ENCODE measurements at regions of chr11 and their contacts with region 1.

Region 1: DNA sequence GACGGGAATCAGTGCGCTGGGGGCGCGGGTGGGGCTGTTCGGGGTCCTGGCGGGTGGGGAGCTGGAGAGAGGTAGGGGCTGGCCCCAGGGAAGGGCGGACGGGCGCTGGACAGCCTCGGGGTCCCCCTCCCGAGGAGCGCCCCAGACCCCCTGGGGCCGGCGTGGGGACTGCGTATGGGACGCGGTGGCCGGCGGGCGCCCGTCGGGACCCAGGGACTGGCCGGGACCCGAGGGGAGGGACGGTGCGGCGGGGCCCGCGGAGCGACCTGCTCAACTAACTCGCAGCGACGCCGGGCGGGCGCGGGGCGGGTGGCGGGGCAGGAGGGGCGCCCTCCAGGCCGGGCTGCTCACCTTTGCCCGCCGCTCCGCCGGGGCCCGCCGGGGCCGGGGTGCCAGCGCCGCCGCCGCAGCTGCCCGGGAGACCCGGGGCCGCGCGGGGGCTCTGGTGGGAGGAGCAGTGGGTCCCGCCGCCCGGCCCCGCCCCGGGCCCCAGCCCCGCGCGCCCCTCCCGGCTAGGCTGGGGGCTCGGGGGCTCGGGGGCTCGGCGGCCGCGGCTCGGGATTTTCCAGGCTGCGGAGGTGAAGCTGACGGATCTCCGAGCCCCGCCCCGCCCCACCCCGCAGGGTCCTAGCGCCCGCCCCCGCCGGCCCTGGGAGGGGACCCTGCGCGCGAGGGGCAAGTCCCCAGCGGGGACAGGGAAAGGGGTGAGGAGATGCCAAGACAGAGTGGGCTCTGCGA is 12.4 kb downstream of the STARD10 start:
- DNase-seq: peak in 3 of 5 donors; percentile 70 to 86 (median 81)
- H3K4me3 ChIP-seq: peak overlapping the region in 2 of 3 donors; percentile 60 to 71
- H3K27ac ChIP-seq: peak overlapping the region; percentile 61 to 71
- H3K4me1 ChIP-seq: peaks cover 0 to 52% (median 19%) of the 10 kb centered on the region in 3 donors
- H3K27me3 ChIP-seq: no peaks in the 10 kb centered on the region
- CTCF ChIP-seq: no peak

Region 2: GRCh38 chr11:72736452-72737069 is 44.9 kb before region 1 on chr11:
- intact Hi-C with region 1: loop called (anchors 10 kb)
- DNase-seq: peak in 1 of 5 donors; percentile 84
- H3K4me3 ChIP-seq: no peak overlapping the region
- H3K27ac ChIP-seq: no peak overlapping the region
- H3K4me1 ChIP-seq: peaks cover 0 to 18% (median 3%) of the 10 kb centered on the region in 3 donors
- H3K27me3 ChIP-seq: no peaks in the 10 kb centered on the region
- CTCF ChIP-seq: no peak

Region 3: GRCh38 chr11:73288873-73289707 is 507.6 kb after region 1 on chr11:
- intact Hi-C with region 1: no loop called
- DNase-seq: peak; percentile 77 to 92 (median 83)
- H3K4me3 ChIP-seq: peak overlapping the region; percentile 41 to 50 (median 47)
- H3K27ac ChIP-seq: peak overlapping the region; percentile 38 to 75
- H3K4me1 ChIP-seq: peaks cover 4 to 16% (median 10%) of the 10 kb centered on the region in 3 donors
- H3K27me3 ChIP-seq: no peaks in the 10 kb centered on the region
- CTCF ChIP-seq: peak; percentile 93

Measured in kidney (tissue), 22 donors.